A549 (cell line): ENCODE measurements at regions of chr3 and their contacts with region 1.

Region 1: DNA sequence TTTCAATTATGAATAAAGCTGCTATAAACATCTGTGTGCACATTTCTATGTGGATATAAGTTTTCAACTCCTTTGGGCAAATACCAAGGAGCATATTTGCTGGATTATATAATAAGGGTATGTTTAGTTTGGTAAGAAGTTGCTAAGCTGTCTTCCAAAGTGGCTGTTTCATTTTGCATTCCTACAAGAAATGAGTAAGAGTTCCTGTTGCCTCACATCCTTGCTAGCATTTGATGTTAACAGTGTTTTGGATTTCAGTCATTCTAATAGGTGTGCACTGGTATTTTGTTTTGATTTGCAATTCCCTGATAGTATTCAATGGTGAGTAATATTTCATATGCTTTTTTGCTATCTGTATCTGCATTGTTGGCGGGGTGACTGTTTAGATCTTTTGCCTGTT is 120.7 kb upstream of the MDFIC2 start:
- DNase-seq: no peak
- ATAC-seq: no peak
- H3K4me3 ChIP-seq: no peak overlapping the region
- H3K27ac ChIP-seq: no peak overlapping the region
- H3K4me1 ChIP-seq: peaks cover 3% of the 10 kb centered on the region; the same call in 1 of the 3 replicates
- CTCF ChIP-seq: no peak
- EP300 ChIP-seq: no peak
- POLR2A ChIP-seq: no peak
- RAD21 ChIP-seq: no peak

Region 2: GRCh38 chr3:70488131-70488530 is 55.0 kb after region 1 on chr3:
- CTCF ChIA-PET with region 1: no interaction called
- POLR2A ChIA-PET with region 1: no interaction called
- DNase-seq: no peak
- ATAC-seq: no peak
- H3K4me3 ChIP-seq: no peak overlapping the region
- H3K27ac ChIP-seq: no peak overlapping the region
- H3K4me1 ChIP-seq: no peaks in the 10 kb centered on the region
- CTCF ChIP-seq: no peak
- EP300 ChIP-seq: no peak
- POLR2A ChIP-seq: no peak
- RAD21 ChIP-seq: no peak

Region 3: GRCh38 chr3:71614869-71615268 is 1181.8 kb after region 1 on chr3:
- CTCF ChIA-PET with region 1: no interaction called
- POLR2A ChIA-PET with region 1: interaction called, 10 read pairs
- DNase-seq: no peak
- ATAC-seq: no peak
- H3K4me3 ChIP-seq: no peak overlapping the region
- H3K27ac ChIP-seq: no peak overlapping the region
- H3K4me1 ChIP-seq: no peaks in the 10 kb centered on the region
- CTCF ChIP-seq: no peak
- EP300 ChIP-seq: no peak
- POLR2A ChIP-seq: no peak
- RAD21 ChIP-seq: no peak